GM13976 (cell line): ENCODE measurements at regions of chr7 and their contacts with region 1.

Region 1: GRCh38 chr7:76011442-76011861 is 17.1 kb upstream of the TMEM120A start:
- DNase-seq: no peak
- CTCF ChIP-seq: no peak

Region 2: GRCh38 chr7:75814407-75814947 is 197.0 kb before region 1 on chr7:
- in situ Hi-C with region 1: no loop called
- DNase-seq: no peak
- CTCF ChIP-seq: no peak

Region 3: DNA sequence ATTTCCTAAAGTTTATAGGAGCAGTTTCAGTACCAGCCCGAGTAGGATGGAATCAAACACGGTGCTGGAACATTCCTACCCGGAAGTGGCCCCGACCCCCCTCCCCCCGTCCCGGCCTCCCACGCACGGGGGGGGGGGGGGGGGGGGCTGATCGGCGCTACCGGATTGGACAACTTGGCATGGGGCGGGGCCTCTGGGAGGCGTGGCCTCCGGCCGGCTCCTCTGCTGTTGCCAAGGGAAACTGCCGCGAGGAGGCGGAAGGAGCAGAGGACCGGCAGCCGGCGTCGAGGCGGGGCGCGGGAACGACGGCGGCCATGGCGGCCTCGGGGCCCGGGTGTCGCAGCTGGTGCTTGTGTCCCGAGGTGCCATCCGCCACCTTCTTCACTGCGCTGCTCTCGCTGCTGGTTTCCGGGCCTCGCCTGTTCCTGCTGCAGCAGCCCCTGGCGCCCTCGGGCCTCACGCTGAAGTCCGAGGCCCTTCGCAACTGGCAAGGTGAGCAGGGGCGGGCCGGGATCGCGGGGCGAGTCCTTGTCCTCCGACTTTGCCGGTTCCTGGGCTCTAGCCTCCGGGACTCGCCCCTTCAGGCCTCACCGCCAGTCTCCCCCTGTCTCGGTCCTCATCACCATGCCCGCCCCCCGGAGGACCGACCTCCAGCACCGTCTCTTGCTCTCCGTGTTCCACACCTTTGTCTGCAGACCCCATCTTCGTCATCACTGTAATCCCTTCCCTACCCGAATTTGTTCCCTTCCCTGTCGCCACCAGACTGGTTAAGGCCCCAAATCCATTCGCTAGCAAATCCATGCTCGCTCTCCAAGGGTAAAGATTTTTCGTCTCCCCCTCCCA is 132.5 kb before region 1 on chr7 and contains the start of gene RHBDD2:
- in situ Hi-C with region 1: loop called (anchors 10 kb)
- DNase-seq: peak; percentile 100
- CTCF ChIP-seq: peak; percentile 34